ENCODE measurements at regions of chr12 and their contacts with region 1.

Region 1: GRCh38 chr12:25364529-25365339 is 114.0 kb upstream of the KRAS start:
- DNase-seq: peak in 2 of 9 donors; percentile 22 to 27
- ATAC-seq: peak; percentile 55
- H3K4me3 ChIP-seq: no peak overlapping the region
- H3K4me3 Mint-ChIP-seq: peak overlapping the region; percentile 0 to 83 (median 64)
- H3K27ac ChIP-seq: no peak overlapping the region
- H3K27ac Mint-ChIP-seq: peak overlapping the region; percentile 5 to 82 (median 61)
- H3K4me1 ChIP-seq: peaks cover 0 to 8% of the 10 kb centered on the region in 2 donors
- H3K4me1 Mint-ChIP-seq: peaks cover 0 to 18% (median 15%) of the 10 kb centered on the region in 7 donors
- H3K27me3 ChIP-seq: no peaks in the 10 kb centered on the region
- H3K27me3 Mint-ChIP-seq: peaks cover 0 to 4% (median 0%) of the 10 kb centered on the region in 5 donors

Region 2: GRCh38 chr12:25269701-25270100 is 95.0 kb before region 1 on chr12:
- CTCF ChIA-PET with region 1: no interaction called
- POLR2A ChIA-PET with region 1: no interaction called
- intact Hi-C with region 1: no loop called
- DNase-seq: no peak
- ATAC-seq: peak; percentile 56
- H3K4me3 ChIP-seq: no peak overlapping the region
- H3K4me3 Mint-ChIP-seq: no peak overlapping the region
- H3K27ac ChIP-seq: no peak overlapping the region
- H3K27ac Mint-ChIP-seq: no peak overlapping the region
- H3K4me1 ChIP-seq: no peaks in the 10 kb centered on the region
- H3K4me1 Mint-ChIP-seq: peaks cover 0 to 4% (median 0%) of the 10 kb centered on the region in 7 donors
- H3K27me3 ChIP-seq: no peaks in the 10 kb centered on the region
- H3K27me3 Mint-ChIP-seq: no peaks in the 10 kb centered on the region

Region 3: GRCh38 chr12:25377469-25378177 is 12.9 kb after region 1 on chr12:
- CTCF ChIA-PET with region 1: interaction called, 6 read pairs
- POLR2A ChIA-PET with region 1: interaction called, 56 read pairs
- intact Hi-C with region 1: loop called in 1 of 2 experiments (anchors 1 kb)
- DNase-seq: peak in 8 of 9 donors; percentile 46 to 81 (median 68)
- ATAC-seq: peak; percentile 90
- H3K4me3 ChIP-seq: no peak overlapping the region
- H3K4me3 Mint-ChIP-seq: peak overlapping the region; percentile 26 to 70 (median 60)
- H3K27ac ChIP-seq: peak overlapping the region; percentile 80
- H3K27ac Mint-ChIP-seq: peak overlapping the region; percentile 82 to 97 (median 92)
- H3K4me1 ChIP-seq: peaks cover 9 to 38% of the 10 kb centered on the region in 2 donors
- H3K4me1 Mint-ChIP-seq: peaks cover 27 to 71% (median 68%) of the 10 kb centered on the region in 7 donors
- H3K27me3 ChIP-seq: no peaks in the 10 kb centered on the region
- H3K27me3 Mint-ChIP-seq: no peaks in the 10 kb centered on the region

Region 4: GRCh38 chr12:25455696-25456095 is 91.0 kb after region 1 on chr12:
- CTCF ChIA-PET with region 1: no interaction called
- POLR2A ChIA-PET with region 1: no interaction called
- intact Hi-C with region 1: no loop called
- DNase-seq: no peak
- ATAC-seq: no peak
- H3K4me3 ChIP-seq: no peak overlapping the region
- H3K4me3 Mint-ChIP-seq: no peak overlapping the region
- H3K27ac ChIP-seq: no peak overlapping the region
- H3K27ac Mint-ChIP-seq: no peak overlapping the region
- H3K4me1 ChIP-seq: no peaks in the 10 kb centered on the region
- H3K4me1 Mint-ChIP-seq: peaks cover 0 to 3% (median 0%) of the 10 kb centered on the region in 7 donors
- H3K27me3 ChIP-seq: no peaks in the 10 kb centered on the region
- H3K27me3 Mint-ChIP-seq: peaks cover 0 to 10% (median 6%) of the 10 kb centered on the region in 5 donors

Measured in naive thymus-derived CD4-positive, alpha-beta T cell (primary cell).